Motor neuron (in vitro differentiated cells): ENCODE measurements at regions of chr7 and their contacts with region 1.

Region 1: DNA sequence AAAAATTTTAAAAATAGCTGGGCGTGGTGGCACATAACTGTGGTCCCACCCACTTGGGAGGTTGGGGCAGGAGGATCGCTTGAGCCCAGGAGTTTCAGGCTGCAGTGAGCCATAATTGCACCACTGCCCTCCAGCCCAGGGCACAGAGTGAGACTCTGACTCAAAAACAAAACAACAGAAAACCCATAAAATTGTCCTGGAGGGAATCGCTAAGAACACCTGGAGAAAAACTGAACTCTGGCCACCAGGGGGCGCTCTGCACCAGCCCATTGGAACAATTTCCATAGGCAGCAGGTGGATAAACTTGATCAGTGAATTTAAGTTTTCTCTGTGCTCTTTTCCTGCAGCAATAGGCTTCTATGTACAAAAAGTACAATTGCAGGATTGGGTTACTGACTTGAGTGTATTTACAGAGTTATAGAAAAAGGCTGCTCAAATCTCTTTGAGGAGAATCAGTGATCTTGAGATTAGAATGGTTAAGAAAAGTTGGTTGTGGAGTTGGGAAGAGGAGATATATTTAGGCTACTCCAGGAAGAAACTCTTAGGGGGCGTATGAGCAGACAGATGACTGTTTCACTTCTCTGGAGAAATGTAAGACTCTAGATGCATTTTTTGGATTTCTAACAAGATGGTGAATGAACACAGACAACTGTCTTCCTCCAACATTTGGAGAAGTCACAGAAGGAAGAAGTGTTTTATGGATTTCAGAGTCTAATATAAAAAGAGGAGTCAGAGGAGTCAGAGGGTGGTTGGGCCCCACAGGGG is 274.9 kb upstream of the GALNT17 start:
- ATAC-seq: peak in 6 of 8 experiments; percentile 37 to 54 (median 48)
- H3K4me3 ChIP-seq: no peak overlapping the region
- H3K27ac ChIP-seq: no peak overlapping the region
- H3K4me1 ChIP-seq: peaks cover 0 to 6% of the 10 kb centered on the region in 2 donors

Region 2: DNA sequence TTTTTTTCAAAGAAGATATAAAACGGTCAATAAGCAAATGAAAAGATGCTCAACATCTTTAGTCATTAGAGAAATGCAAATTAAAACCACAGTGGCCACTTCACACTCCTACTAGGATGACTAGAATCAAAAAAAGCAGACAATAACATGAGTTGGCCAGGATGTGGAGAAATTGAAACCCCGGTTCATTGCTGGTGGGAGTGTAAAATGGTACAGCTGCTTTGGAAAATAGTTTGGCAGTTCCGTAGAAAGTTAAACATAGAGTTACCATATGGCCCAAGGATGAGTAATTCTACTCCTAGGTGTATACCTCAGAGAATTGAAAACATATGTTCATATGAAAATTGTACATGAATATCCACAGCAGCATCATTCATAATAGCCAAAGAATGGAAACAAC is 848.2 kb after region 1 on chr7:
- in situ Hi-C with region 1: loop called in 1 of 9 experiments (anchors 25 kb)
- ATAC-seq: no peak
- H3K4me3 ChIP-seq: no peak overlapping the region
- H3K27ac ChIP-seq: no peak overlapping the region
- H3K4me1 ChIP-seq: no peaks in the 10 kb centered on the region

Region 3: GRCh38 chr7:71727347-71727746 is 870.3 kb after region 1 on chr7:
- in situ Hi-C with region 1: loop called in 8 of 9 experiments (anchors 5 to 25 kb)
- ATAC-seq: no peak
- H3K4me3 ChIP-seq: no peak overlapping the region
- H3K27ac ChIP-seq: no peak overlapping the region
- H3K4me1 ChIP-seq: no peaks in the 10 kb centered on the region

Region 4: DNA sequence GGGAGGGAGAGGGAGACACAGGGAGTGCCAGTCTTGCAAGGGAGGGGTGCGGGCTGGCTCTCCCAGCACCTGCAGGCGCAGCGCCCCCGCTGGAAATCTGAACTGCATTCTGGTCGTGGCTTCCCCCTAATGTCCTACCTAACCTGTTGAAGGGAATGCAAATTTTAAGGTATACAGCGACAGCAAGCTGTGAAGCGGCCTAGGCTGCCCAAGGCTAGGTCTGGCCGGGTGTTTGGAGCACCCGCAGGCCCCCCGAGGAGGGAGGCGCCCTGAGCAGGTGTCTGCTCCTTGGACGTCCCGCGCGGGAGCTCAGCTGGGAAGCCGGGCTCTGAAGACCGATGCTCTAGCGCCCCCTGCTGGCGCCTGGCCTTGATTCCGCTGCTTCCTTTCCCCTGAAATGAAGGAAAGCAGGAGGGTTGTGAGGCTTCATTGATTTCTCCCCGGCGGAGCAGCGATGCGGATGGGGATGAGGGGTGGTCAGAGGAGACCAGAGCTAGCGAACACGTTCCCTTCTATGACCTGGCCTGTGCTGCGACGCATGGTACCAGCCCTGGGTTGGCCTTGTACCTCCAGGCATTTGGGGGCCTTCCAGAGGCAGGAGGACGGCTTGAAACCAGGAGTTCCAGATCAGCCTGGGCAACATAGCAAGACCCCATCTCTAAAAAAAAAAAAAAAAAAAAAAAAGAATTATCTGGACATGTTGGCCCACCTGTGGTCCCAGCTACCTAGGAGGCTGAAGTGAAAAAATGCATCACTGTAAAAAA is 876.2 kb after region 1 on chr7:
- in situ Hi-C with region 1: loop called in 7 of 9 experiments (anchors 5 to 25 kb)
- ATAC-seq: peak; percentile 75 to 99 (median 94)
- H3K4me3 ChIP-seq: peak overlapping the region; percentile 18 to 39 (median 28)
- H3K27ac ChIP-seq: no peak overlapping the region
- H3K4me1 ChIP-seq: no peaks in the 10 kb centered on the region